Body of pancreas (tissue), 4 donors: ENCODE measurements at regions of chr9 and their contacts with region 1.

Region 1: GRCh38 chr9:72871685-72872084 is 81.2 kb downstream of the ALDH1A1 start:
- DNase-seq: no peak
- ATAC-seq: no peak
- H3K4me3 ChIP-seq: no peak overlapping the region
- H3K27ac ChIP-seq: no peak overlapping the region
- H3K4me1 ChIP-seq: peaks cover 3% of the 10 kb centered on the region
- H3K27me3 ChIP-seq: no peaks in the 10 kb centered on the region
- CTCF ChIP-seq: peak; percentile 15 to 75 (median 63)
- POLR2A ChIP-seq: no peak

Region 2: GRCh38 chr9:71944475-71945375 is 927.0 kb before region 1 on chr9:
- intact Hi-C with region 1: no loop called
- DNase-seq: no peak
- ATAC-seq: no peak
- H3K4me3 ChIP-seq: no peak overlapping the region
- H3K27ac ChIP-seq: no peak overlapping the region
- H3K4me1 ChIP-seq: no peaks in the 10 kb centered on the region
- H3K27me3 ChIP-seq: no peaks in the 10 kb centered on the region
- CTCF ChIP-seq: no peak
- POLR2A ChIP-seq: no peak

Region 3: GRCh38 chr9:72912476-72913381 is 41.0 kb after region 1 on chr9:
- intact Hi-C with region 1: no loop called
- DNase-seq: no peak
- ATAC-seq: no peak
- H3K4me3 ChIP-seq: no peak overlapping the region
- H3K27ac ChIP-seq: peak overlapping the region in 2 of 4 donors; percentile 14 to 26
- H3K4me1 ChIP-seq: peaks cover 11% of the 10 kb centered on the region
- H3K27me3 ChIP-seq: no peaks in the 10 kb centered on the region
- CTCF ChIP-seq: no peak
- POLR2A ChIP-seq: no peak

Region 4: GRCh38 chr9:73081979-73082657 is 210.4 kb after region 1 on chr9:
- intact Hi-C with region 1: loop called (anchors 10 kb)
- DNase-seq: peak in 3 of 4 donors; percentile 18 to 34 (median 19)
- ATAC-seq: peak; percentile 68
- H3K4me3 ChIP-seq: no peak overlapping the region
- H3K27ac ChIP-seq: no peak overlapping the region
- H3K4me1 ChIP-seq: no peaks in the 10 kb centered on the region
- H3K27me3 ChIP-seq: no peaks in the 10 kb centered on the region
- CTCF ChIP-seq: peak; percentile 49 to 86 (median 78)
- POLR2A ChIP-seq: no peak